Endothelial cell of umbilical vein (primary cell): ENCODE measurements at regions of chr1 and their contacts with region 1.

Region 1: DNA sequence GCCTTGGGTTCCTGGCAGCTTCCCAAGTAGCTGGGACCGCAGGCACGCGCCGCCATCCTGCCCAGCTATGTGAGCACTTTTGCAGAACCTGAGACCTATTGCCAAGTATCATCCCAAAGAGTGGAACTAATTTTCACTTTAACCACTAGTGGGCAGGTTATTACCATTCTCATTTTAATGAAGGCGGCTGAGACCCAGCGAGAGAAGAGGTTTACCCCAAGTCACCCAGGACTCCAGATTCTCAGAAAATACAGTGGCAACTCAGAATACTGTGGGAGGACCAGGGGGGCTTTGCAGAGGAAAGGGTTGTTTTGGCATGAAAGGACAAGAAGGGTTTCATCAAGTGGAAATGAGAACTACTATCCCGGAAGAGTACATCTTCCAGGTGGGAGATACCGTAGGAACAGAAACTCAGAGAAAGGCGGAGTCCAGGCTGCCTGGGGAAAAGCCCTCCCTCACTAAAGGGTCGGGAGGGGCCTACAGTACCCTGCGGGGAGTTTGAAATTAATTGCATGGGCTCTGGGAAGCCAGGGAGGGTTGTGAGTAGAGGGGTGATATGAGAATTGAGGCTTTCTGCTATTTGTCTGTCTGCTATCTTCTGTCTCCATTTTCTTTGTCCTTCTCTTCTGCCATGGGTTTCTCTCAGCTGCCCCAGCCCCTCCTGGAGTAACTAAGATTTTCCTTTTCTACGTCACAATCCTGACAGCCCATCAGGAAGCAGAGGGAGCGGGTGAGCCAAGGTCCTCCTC is 7.2 kb upstream of the SEMA4A start:
- DNase-seq: peak; percentile 92
- H3K4me3 ChIP-seq: peak overlapping the region in 1 of 3 experiments; percentile 5
- H3K27ac ChIP-seq: peak overlapping the region; percentile 18
- H3K4me1 ChIP-seq: peaks cover 24% of the 10 kb centered on the region
- H3K27me3 ChIP-seq: no peaks in the 10 kb centered on the region
- CTCF ChIP-seq: peak; percentile 63 to 67
- POLR2A ChIP-seq: no peak

Region 2: GRCh38 chr1:156160743-156161171 is 14.6 kb after region 1 on chr1:
- CTCF ChIA-PET with region 1: interaction called, 11 read pairs
- POLR2A ChIA-PET with region 1: interaction called, 3 read pairs
- dilution Hi-C with region 1: no loop called
- intact Hi-C with region 1: no loop called
- DNase-seq: peak; percentile 78
- H3K4me3 ChIP-seq: no peak overlapping the region
- H3K27ac ChIP-seq: peak overlapping the region; percentile 9
- H3K4me1 ChIP-seq: peaks cover 20% of the 10 kb centered on the region
- H3K27me3 ChIP-seq: no peaks in the 10 kb centered on the region
- CTCF ChIP-seq: no peak
- POLR2A ChIP-seq: no peak

Region 3: GRCh38 chr1:156212833-156213643 is 66.8 kb after region 1 on chr1 and contains the start of gene PMF1:
- CTCF ChIA-PET with region 1: interaction called, 28 read pairs
- POLR2A ChIA-PET with region 1: interaction called, 3 read pairs
- dilution Hi-C with region 1: no loop called
- intact Hi-C with region 1: loop called (anchors 1 kb)
- DNase-seq: peak; percentile 98
- H3K4me3 ChIP-seq: peak within 1 kb of the TSS; percentile 44 to 80 (median 79)
- H3K27ac ChIP-seq: peak within 1 kb of the TSS; percentile 97
- H3K4me1 ChIP-seq: peaks cover 15% of the 10 kb centered on the region
- H3K27me3 ChIP-seq: no peaks in the 10 kb centered on the region
- CTCF ChIP-seq: no peak
- POLR2A ChIP-seq: peak; percentile 90
- total RNA-seq, gene PMF1: 58.4 and 61.6 TPM in 2 replicates

Region 4: GRCh38 chr1:156259805-156260204 is 113.6 kb after region 1 on chr1:
- CTCF ChIA-PET with region 1: interaction called, 5 read pairs
- POLR2A ChIA-PET with region 1: no interaction called
- dilution Hi-C with region 1: no loop called
- intact Hi-C with region 1: loop called (anchors 1 kb)
- DNase-seq: no peak
- H3K4me3 ChIP-seq: no peak overlapping the region
- H3K27ac ChIP-seq: no peak overlapping the region
- H3K4me1 ChIP-seq: no peaks in the 10 kb centered on the region
- H3K27me3 ChIP-seq: no peaks in the 10 kb centered on the region
- CTCF ChIP-seq: peak in 1 of 2 donors; percentile 6
- POLR2A ChIP-seq: no peak